Activated CD4-positive, alpha-beta memory T cell treated with anti-CD3 and anti-CD28 coated beads, Interleukin-2, amount 10 ng/mL, durations not matched to agents 7 days and 5 days (primary cell): ENCODE measurements at regions of chr16 and their contacts with region 1.

Region 1: DNA sequence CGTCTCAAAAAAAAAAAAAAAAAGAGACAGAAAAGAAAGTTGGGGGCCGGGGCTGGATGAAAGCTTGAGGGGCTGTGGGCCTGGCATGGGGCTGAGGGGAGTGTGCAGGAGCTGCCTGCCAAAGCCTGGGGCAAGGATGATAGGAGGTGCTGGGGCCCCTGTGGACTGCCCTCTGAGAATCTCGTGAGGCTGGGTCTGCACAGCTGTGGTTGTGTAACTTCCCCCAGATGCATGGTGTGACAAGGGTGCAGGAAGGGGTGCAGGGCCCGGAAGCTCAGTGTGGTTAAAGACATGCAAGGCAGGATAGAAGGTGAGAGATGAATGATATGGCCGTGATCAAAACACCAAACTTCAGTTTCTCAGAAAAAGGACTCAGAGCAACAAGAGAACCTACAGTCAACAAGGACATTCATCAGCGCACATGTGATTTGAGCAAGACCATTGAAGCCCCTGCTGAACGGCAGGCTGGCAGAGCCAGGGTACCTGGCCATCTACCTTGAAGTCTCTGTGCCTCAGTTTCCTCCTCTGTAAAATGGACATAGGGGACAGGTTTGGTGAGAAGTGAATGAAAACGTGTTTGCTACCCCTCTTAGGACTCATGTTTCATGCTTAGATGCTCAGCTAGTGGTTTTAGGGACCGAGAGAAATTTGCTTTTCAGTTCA is 9.6 kb downstream of the IL32 start:
- DNase-seq: peak; percentile 94
- H3K4me3 Mint-ChIP-seq: peak overlapping the region; percentile 77
- H3K27ac Mint-ChIP-seq: peak overlapping the region; percentile 100
- H3K4me1 Mint-ChIP-seq: peaks cover 88% of the 10 kb centered on the region
- H3K27me3 Mint-ChIP-seq: no peaks in the 10 kb centered on the region

Region 2: DNA sequence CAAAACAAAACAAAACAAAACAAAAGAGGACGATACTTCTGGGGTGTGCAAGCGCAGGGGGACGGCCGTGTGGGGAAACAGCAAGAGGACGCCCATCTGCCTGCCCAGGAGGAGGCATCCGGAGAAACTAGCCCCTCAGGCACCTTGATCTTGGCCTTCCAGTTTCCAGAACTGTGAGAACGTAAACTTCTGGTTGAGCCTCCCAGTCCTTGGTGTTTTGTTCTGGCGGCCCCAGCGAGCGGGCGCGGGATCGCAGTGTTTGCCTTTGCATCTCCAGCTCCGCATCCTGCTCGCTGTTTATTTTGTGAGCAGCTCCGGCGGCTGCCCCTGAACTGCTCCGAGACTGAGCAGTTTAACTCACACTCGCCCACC is 29.6 kb before region 1 on chr16:
- CTCF ChIA-PET with region 1: interaction called, 3 read pairs
- POLR2A ChIA-PET with region 1: interaction called, 36 read pairs
- DNase-seq: peak; percentile 61
- H3K4me3 Mint-ChIP-seq: peak overlapping the region; percentile 85
- H3K27ac Mint-ChIP-seq: peak overlapping the region; percentile 78
- H3K4me1 Mint-ChIP-seq: peaks cover 51% of the 10 kb centered on the region
- H3K27me3 Mint-ChIP-seq: peaks cover 24% of the 10 kb centered on the region

Region 3: GRCh38 chr16:3051494-3051893 is 23.5 kb before region 1 on chr16:
- CTCF ChIA-PET with region 1: interaction called, 5 read pairs
- POLR2A ChIA-PET with region 1: interaction called, 96 read pairs
- DNase-seq: no peak
- H3K4me3 Mint-ChIP-seq: peak overlapping the region; percentile 57
- H3K27ac Mint-ChIP-seq: peak overlapping the region; percentile 77
- H3K4me1 Mint-ChIP-seq: peaks cover 87% of the 10 kb centered on the region
- H3K27me3 Mint-ChIP-seq: peaks cover 2% of the 10 kb centered on the region

Region 4: DNA sequence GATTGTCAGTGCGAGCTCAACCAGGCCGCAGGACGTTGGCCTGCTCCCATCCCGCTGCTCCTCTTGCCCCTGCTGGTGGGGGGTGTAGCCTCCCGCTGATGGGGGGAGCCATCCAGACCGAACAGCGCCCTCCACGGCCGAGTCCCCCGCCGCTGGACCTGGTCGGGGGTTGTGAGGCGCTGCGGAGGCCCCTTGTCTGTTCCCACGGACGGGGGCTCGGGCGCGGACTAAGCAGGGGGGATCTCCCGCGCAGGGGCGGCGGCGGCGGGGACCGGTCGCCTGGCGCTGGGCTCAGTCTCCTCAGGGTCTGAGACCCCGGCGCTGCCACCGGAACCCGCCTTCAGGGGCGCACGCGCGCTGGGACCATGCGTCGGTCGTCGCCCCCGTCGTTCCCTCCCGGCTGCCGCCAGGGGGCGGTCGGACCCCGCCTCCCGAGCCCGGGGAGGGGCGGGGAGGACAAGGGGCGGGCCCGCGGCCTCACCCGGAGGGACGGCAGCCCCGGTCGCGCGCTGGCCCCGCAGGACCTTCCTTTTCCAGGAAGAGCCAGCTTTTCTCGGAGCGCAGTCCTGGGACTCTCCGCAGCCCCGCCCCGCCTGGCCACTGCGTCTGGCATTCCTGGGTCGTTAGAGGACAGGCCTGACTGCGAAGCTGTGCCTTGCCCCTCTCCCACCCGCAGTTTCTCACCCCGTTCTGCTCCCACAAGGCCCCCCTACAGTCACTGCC is 15.8 kb before region 1 on chr16:
- CTCF ChIA-PET with region 1: interaction called, 26 read pairs
- POLR2A ChIA-PET with region 1: interaction called, 187 read pairs
- DNase-seq: peak; percentile 90
- H3K4me3 Mint-ChIP-seq: peak overlapping the region; percentile 79
- H3K27ac Mint-ChIP-seq: peak overlapping the region; percentile 95
- H3K4me1 Mint-ChIP-seq: peaks cover 74% of the 10 kb centered on the region
- H3K27me3 Mint-ChIP-seq: no peaks in the 10 kb centered on the region

Region 5: DNA sequence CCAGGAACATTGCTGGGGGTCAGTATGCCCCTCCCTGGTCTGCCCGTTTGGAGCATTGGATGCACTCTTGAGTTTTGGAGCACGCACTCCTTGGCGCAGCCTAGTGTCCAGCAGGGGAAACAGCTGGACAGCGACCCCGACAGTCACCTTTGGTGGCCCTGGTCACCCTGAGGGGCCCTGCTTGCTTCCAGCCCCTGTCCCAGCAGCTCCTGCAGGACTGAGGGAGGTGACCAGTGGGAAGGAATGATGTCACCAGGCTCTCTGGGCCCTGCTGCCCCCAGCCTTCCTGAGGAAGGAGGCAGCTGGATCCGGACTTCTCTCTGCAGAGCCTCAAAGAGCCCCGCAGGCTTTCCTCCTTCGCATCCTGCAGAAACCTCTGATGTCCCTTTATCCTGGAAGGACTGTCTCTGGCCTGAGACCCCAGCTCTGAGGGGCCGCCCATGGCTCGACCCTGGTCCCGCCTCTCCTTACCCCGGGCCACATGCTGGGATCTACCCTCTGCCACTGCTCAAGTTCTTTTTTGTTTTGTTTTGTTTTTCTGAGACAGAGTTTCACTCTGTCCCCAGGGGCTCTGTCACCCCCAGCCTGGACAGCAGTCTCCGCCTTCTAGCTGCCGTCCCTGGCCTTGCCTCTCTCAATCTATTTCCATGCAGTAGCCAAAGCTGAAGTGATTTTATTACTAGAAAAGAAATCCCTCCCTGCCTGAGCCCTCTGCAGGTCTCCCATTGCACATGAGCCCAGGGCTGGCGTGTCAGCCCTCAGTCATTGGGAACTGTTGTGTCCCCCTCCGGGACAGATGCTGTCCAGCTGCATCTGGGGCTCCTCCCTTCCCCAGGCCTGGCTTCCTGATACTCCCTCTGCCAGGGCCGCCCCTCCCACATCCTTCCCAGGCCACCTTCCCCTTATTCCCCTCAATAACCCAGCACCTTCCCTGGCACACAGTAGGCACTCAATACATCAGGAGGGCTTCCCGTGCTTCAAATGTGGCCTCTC is 12.5 kb after region 1 on chr16:
- CTCF ChIA-PET with region 1: interaction called, 16 read pairs
- POLR2A ChIA-PET with region 1: interaction called, 26 read pairs
- DNase-seq: no peak
- H3K4me3 Mint-ChIP-seq: no peak overlapping the region
- H3K27ac Mint-ChIP-seq: no peak overlapping the region
- H3K4me1 Mint-ChIP-seq: peaks cover 44% of the 10 kb centered on the region
- H3K27me3 Mint-ChIP-seq: no peaks in the 10 kb centered on the region

Region 6: DNA sequence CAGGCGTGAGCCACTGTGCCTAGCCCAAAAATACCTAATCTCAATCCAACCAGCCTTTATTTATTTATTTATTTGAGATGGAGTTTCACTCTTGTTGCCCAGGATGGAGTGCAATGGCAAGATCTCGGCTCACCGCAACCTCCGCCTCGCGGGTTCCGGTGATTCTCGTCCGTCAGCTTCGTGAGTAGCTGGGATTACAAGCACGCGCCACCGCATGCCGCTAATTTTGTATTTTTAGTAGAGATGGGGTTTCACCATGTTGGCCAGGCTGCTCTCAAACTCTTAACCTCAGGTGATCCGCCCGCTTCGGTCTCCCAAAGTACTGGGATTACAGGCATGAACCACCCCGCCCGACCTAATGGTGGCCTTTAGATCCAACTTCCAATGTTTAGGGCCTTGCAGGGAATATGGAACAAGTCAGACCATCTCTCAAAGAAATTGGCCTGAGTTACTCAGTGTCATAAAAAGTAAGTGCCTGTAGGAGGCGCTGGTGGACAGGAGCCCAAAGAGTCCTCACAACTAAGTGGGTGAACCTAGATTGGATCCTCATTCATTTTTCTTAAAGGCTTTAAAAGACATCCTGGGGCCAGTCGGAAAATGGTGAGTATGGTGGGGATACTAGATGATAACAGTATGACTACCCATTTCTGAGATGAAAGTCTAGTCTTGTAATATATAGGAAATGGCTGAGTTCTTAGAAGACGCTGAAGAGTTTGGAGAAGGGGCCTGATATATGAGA is 19.5 kb after region 1 on chr16:
- CTCF ChIA-PET with region 1: interaction called, 26 read pairs
- POLR2A ChIA-PET with region 1: interaction called, 84 read pairs
- DNase-seq: peak; percentile 68
- H3K4me3 Mint-ChIP-seq: peak overlapping the region; percentile 1
- H3K27ac Mint-ChIP-seq: peak overlapping the region; percentile 37
- H3K4me1 Mint-ChIP-seq: peaks cover 46% of the 10 kb centered on the region
- H3K27me3 Mint-ChIP-seq: no peaks in the 10 kb centered on the region

Region 7: GRCh38 chr16:3099732-3100499 is 24.9 kb after region 1 on chr16:
- CTCF ChIA-PET with region 1: interaction called, 26 read pairs
- POLR2A ChIA-PET with region 1: interaction called, 84 read pairs
- DNase-seq: peak; percentile 96
- H3K4me3 Mint-ChIP-seq: peak overlapping the region; percentile 75
- H3K27ac Mint-ChIP-seq: peak overlapping the region; percentile 80
- H3K4me1 Mint-ChIP-seq: peaks cover 66% of the 10 kb centered on the region
- H3K27me3 Mint-ChIP-seq: no peaks in the 10 kb centered on the region